ENCODE measurements at regions of chr19 and their contacts with region 1.

Region 1: GRCh38 chr19:10416380-10417257 is 3.7 kb upstream of the PDE4A start:
- DNase-seq: peak; percentile 96
- H3K4me3 Mint-ChIP-seq: peak overlapping the region; percentile 73
- H3K27ac Mint-ChIP-seq: peak overlapping the region; percentile 86
- H3K4me1 Mint-ChIP-seq: peaks cover 51% of the 10 kb centered on the region
- H3K27me3 Mint-ChIP-seq: peaks cover 35% of the 10 kb centered on the region

Region 2: DNA sequence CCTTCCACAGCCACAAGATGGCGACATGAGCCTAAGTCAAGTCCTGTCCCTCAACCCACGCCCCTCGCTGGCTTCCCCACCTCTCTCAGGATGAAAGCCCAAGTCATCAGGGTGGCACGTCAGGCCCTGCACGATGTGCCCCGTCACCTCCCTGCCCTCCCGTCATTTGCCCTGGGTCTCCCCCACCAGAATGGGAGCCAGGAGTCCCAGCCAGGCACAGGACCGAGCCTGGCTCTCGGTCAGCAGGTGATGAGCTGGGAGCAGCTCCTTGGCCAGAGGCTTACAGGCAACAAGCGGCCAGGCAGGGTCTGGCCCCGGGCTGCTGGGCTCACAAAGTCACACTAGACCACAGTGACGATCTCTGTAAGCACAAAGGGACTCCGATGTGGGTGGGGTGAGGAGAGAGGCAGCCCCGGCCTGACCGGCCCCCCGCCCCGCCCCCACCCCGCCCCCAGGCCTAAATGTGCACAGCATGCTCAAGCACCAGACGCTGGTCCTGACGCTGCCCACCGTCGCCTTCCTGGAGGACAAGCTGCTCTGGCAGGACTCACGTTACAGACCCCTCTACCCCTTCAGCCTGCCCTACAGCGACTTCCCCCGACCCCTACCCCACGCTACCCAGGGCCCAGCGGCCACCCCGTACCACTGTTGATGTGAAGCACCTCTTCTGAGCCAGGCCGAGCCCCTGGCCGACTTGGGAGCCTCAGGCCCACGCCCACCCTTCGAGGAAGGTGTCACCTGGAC is 157.3 kb before region 1 on chr19:
- CTCF ChIA-PET with region 1: interaction called, 16 read pairs
- POLR2A ChIA-PET with region 1: interaction called, 3 read pairs
- intact Hi-C with region 1: no loop called
- DNase-seq: peak; percentile 98
- H3K4me3 Mint-ChIP-seq: no peak overlapping the region
- H3K27ac Mint-ChIP-seq: peak overlapping the region; percentile 93
- H3K4me1 Mint-ChIP-seq: peaks cover 26% of the 10 kb centered on the region
- H3K27me3 Mint-ChIP-seq: no peaks in the 10 kb centered on the region

Region 3: DNA sequence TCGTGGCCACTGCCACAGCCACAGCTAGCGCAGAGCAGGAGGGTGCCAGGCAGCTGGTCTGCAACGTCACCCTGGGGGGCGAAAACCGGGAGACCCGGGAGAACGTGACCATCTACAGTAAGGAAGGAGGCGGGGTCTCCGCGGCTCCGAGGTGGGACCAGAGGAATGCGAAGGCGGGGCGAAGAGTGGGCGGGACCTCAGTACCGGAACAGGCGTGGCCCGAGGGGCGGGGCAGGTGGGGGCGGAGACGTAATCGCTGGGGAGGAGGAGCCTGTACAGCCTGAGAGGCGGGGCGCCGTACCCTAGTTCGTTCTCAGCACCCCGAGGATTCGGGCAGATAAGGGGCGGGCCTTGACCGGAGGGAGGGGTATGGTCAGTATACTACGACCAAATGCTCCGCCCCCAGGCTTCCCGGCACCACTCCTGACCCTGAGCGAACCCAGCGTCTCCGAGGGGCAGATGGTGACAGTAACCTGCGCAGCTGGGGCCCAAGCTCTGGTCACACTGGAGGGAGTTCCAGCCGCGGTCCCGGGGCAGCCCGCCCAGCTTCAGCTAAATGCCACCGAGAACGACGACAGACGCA is 124.3 kb before region 1 on chr19:
- CTCF ChIA-PET with region 1: interaction called, 11 read pairs
- POLR2A ChIA-PET with region 1: no interaction called
- intact Hi-C with region 1: no loop called
- DNase-seq: peak; percentile 87
- H3K4me3 Mint-ChIP-seq: peak overlapping the region; percentile 68
- H3K27ac Mint-ChIP-seq: no peak overlapping the region
- H3K4me1 Mint-ChIP-seq: peaks cover 61% of the 10 kb centered on the region
- H3K27me3 Mint-ChIP-seq: peaks cover 76% of the 10 kb centered on the region

Region 4: GRCh38 chr19:10380313-10381102 is 36.1 kb before region 1 on chr19 and contains the start of gene TYK2:
- CTCF ChIA-PET with region 1: no interaction called
- POLR2A ChIA-PET with region 1: interaction called, 5 read pairs
- intact Hi-C with region 1: loop called (anchors 2 kb)
- DNase-seq: peak; percentile 98
- H3K4me3 Mint-ChIP-seq: peak within 1 kb of the TSS; percentile 88
- H3K27ac Mint-ChIP-seq: peak within 1 kb of the TSS; percentile 88
- H3K4me1 Mint-ChIP-seq: peaks cover 20% of the 10 kb centered on the region
- H3K27me3 Mint-ChIP-seq: no peaks in the 10 kb centered on the region
- total RNA-seq, gene TYK2: 168 to 186 TPM

Region 5: GRCh38 chr19:10431943-10432735 is 15.5 kb after region 1 on chr19:
- CTCF ChIA-PET with region 1: interaction called, 836 read pairs
- POLR2A ChIA-PET with region 1: interaction called, 9 read pairs
- intact Hi-C with region 1: loop called (anchors 1 kb)
- DNase-seq: peak; percentile 71
- H3K4me3 Mint-ChIP-seq: peak overlapping the region; percentile 73
- H3K27ac Mint-ChIP-seq: peak overlapping the region; percentile 60
- H3K4me1 Mint-ChIP-seq: peaks cover 53% of the 10 kb centered on the region
- H3K27me3 Mint-ChIP-seq: peaks cover 35% of the 10 kb centered on the region

Region 6: GRCh38 chr19:10486538-10486937 is 69.9 kb after region 1 on chr19:
- CTCF ChIA-PET with region 1: no interaction called
- POLR2A ChIA-PET with region 1: no interaction called
- intact Hi-C with region 1: no loop called
- DNase-seq: no peak
- H3K4me3 Mint-ChIP-seq: no peak overlapping the region
- H3K27ac Mint-ChIP-seq: no peak overlapping the region
- H3K4me1 Mint-ChIP-seq: no peaks in the 10 kb centered on the region
- H3K27me3 Mint-ChIP-seq: no peaks in the 10 kb centered on the region

Measured in activated CD4-positive, alpha-beta memory T cell treated with anti-CD3 and anti-CD28 coated beads for 36 hours (primary cell).